ENCODE measurements at regions of chr14 and their contacts with region 1.

Region 1: DNA sequence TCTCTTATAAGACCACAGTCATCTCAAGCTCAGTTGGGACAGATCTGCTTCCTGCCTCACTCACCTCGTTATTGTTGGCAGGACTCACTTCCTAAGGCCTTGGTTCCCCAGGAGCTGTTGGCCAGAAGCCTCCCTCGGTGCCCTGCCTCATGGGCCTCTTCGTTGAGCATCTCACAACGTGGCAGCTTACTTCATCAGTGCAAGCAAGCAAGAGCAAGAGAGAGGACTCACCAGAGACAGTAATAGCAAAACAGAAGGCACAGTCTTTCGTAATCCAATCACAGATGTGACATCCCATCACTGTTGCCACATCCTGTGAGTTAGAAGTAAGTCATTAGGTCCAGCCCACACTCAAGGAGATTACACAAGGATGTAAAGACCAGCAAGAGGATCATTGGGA is 5.1 kb upstream of the NUMB start:
- DNase-seq: no peak
- ATAC-seq: peak; percentile 40
- H3K4me3 ChIP-seq: peak overlapping the region; percentile 6
- H3K27ac ChIP-seq: peak overlapping the region; percentile 82
- H3K4me1 ChIP-seq: peaks cover 62% of the 10 kb centered on the region
- H3K27me3 ChIP-seq: no peaks in the 10 kb centered on the region
- CTCF ChIP-seq: no peak

Region 2: GRCh38 chr14:73295198-73295796 is 168.1 kb before region 1 on chr14:
- intact Hi-C with region 1: loop called (anchors 10 kb)
- DNase-seq: no peak
- ATAC-seq: peak; percentile 59
- H3K4me3 ChIP-seq: no peak overlapping the region
- H3K27ac ChIP-seq: no peak overlapping the region
- H3K4me1 ChIP-seq: no peaks in the 10 kb centered on the region
- H3K27me3 ChIP-seq: no peaks in the 10 kb centered on the region
- CTCF ChIP-seq: peak; percentile 78